ENCODE measurements at regions of chr3 and their contacts with region 1.

Region 1: GRCh38 chr3:14203521-14204079 is 25.0 kb downstream of the LSM3 start:
- DNase-seq: peak; percentile 60
- ATAC-seq: peak; percentile 73
- H3K4me3 Mint-ChIP-seq: no peak overlapping the region
- H3K27ac Mint-ChIP-seq: no peak overlapping the region
- H3K4me1 Mint-ChIP-seq: no peaks in the 10 kb centered on the region
- H3K27me3 Mint-ChIP-seq: no peaks in the 10 kb centered on the region

Region 2: DNA sequence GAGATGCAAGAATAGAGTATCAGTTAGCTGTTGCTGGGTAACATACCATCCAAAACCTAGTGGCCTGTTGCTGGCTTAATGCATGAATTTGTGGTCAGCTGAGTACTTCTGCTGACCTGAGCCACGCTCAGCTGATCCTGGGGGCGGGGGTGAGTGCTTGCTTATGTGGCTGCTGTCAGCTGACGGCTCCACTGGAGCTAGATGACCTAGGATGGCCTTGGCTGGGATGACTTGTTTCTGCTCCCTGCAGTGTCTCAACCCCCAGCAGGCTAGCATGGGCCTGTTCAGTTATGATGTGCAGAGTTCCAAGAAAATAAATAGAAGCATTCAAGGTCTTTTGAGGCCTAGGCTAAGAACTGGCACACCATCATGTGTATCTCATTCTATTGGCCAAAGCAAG is 590.8 kb before region 1 on chr3:
- CTCF ChIA-PET with region 1: no interaction called
- POLR2A ChIA-PET with region 1: no interaction called
- DNase-seq: no peak
- ATAC-seq: no peak
- H3K4me3 Mint-ChIP-seq: no peak overlapping the region
- H3K27ac Mint-ChIP-seq: no peak overlapping the region
- H3K4me1 Mint-ChIP-seq: no peaks in the 10 kb centered on the region
- H3K27me3 Mint-ChIP-seq: peaks cover 3% of the 10 kb centered on the region

Region 3: GRCh38 chr3:13895155-13896105 is 308.2 kb before region 1 on chr3:
- CTCF ChIA-PET with region 1: interaction called, 24 read pairs
- POLR2A ChIA-PET with region 1: no interaction called
- DNase-seq: peak; percentile 98
- ATAC-seq: peak; percentile 99
- H3K4me3 Mint-ChIP-seq: peak overlapping the region; percentile 84
- H3K27ac Mint-ChIP-seq: peak overlapping the region; percentile 81
- H3K4me1 Mint-ChIP-seq: peaks cover 33% of the 10 kb centered on the region
- H3K27me3 Mint-ChIP-seq: peaks cover 2% of the 10 kb centered on the region

Region 4: DNA sequence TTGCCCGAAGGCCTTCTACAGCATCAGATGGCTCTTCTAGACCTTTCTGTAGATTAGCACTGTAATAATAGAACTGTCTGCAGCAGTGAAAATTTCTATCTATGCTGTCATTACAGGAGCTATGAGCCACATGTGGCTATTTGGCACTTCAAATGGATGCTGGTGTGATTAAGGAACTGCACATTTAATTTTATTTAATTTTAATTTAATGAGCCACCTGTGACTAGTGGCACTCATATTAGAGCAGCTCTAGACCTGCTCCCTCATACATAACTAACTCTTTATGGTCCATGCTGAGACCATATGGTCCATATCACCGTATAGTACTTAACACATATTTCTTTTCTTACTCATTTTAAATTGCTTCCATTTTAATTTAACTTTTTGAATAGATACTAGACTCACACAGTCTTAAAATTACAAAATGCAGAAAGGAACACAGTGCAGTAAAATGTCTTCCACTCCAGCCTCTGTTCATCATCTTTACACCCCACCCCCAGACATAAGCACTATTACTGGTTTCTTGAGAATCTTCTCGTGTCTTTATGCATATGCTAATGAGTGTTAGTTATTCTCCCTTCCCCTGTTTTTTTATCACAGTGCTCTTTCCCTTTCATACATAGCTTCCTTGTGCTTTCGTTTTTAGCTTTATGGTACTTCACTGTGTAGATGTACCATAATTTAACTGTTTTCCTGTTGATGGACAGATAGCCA is 15.4 kb before region 1 on chr3:
- CTCF ChIA-PET with region 1: interaction called, 26 read pairs
- POLR2A ChIA-PET with region 1: no interaction called
- DNase-seq: no peak
- ATAC-seq: no peak
- H3K4me3 Mint-ChIP-seq: no peak overlapping the region
- H3K27ac Mint-ChIP-seq: no peak overlapping the region
- H3K4me1 Mint-ChIP-seq: peaks cover 30% of the 10 kb centered on the region
- H3K27me3 Mint-ChIP-seq: no peaks in the 10 kb centered on the region

Region 5: GRCh38 chr3:14222900-14223594 is 19.4 kb after region 1 on chr3:
- CTCF ChIA-PET with region 1: interaction called, 13 read pairs
- POLR2A ChIA-PET with region 1: no interaction called
- DNase-seq: no peak
- ATAC-seq: no peak
- H3K4me3 Mint-ChIP-seq: no peak overlapping the region
- H3K27ac Mint-ChIP-seq: no peak overlapping the region
- H3K4me1 Mint-ChIP-seq: no peaks in the 10 kb centered on the region
- H3K27me3 Mint-ChIP-seq: peaks cover 13% of the 10 kb centered on the region

Region 6: GRCh38 chr3:14237457-14237856 is 33.9 kb after region 1 on chr3:
- CTCF ChIA-PET with region 1: interaction called, 11 read pairs
- POLR2A ChIA-PET with region 1: no interaction called
- DNase-seq: no peak
- ATAC-seq: no peak
- H3K4me3 Mint-ChIP-seq: no peak overlapping the region
- H3K27ac Mint-ChIP-seq: no peak overlapping the region
- H3K4me1 Mint-ChIP-seq: peaks cover 11% of the 10 kb centered on the region
- H3K27me3 Mint-ChIP-seq: peaks cover 19% of the 10 kb centered on the region

Region 7: DNA sequence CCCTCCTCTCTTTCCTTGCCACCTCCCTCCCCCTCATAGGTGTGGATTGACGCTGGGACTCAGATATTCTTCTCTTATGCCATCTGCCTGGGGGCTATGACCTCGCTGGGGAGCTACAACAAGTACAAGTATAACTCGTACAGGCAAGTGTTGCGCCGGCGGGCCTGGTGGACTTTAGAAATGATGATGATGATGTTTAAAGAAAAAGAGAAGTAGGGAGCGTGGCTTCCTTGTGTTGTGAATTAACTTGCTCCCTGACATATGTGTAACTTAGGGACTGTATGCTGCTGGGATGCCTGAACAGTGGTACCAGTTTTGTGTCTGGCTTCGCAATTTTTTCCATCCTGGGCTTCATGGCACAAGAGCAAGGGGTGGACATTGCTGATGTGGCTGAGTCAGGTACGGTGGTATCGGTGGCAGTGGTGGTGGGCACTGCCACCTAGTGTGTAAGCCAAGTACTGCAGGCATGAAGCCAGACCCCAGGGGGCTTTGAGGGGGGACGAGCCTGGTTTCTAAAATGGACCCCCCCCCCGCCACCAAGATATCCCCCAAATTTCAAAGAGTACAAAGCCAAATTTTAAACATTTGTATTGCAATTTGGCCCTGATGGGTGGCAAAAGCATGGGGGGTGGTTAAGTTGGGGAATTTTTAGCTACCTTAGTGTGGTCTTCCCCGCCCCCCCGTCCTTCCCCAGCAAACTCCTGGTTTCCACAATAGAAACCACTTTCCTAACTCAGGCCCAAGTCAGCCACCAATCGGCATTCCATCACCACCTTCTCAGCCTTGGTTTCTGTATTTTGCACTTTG is 264.4 kb after region 1 on chr3:
- CTCF ChIA-PET with region 1: interaction called, 27 read pairs
- POLR2A ChIA-PET with region 1: no interaction called
- DNase-seq: peak; percentile 44
- ATAC-seq: peak; percentile 48
- H3K4me3 Mint-ChIP-seq: no peak overlapping the region
- H3K27ac Mint-ChIP-seq: peak overlapping the region; percentile 30
- H3K4me1 Mint-ChIP-seq: peaks cover 3% of the 10 kb centered on the region
- H3K27me3 Mint-ChIP-seq: no peaks in the 10 kb centered on the region